A549 (cell line): ENCODE measurements at regions of chr2 and their contacts with region 1.

Region 1: DNA sequence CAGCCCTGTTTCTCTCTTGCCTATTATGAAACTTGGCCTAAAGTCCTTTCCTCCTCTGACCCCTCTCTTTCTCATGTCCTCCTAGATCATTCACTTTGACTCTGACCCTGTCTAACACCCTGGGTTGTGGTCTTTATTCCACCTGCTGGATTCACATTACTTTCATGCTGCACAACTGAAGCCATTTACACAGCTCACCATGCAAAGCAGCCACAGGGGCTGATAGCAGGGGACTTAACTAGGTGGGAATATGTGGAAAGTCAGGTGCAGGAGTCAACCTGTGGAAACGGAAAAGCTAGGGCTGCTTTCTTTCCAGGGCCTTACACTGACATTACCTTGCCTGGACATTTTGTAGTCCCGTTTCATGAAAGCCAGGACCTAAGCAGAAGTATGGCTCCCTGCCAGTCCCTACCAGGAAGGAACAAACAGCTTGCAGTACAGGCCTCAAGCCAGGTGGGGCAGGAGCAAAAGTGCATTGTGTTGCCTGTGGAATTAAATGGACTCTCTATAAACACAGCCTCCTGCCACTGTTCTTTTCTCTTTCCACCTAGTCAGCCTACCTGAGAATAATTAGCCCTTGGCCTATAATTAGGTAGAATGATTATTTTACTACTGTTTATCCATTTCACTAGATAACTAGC is 11.8 kb downstream of the MAPRE3 start:
- DNase-seq: peak; percentile 74 to 79
- ATAC-seq: peak; percentile 95 to 99
- H3K4me3 ChIP-seq: no peak overlapping the region
- H3K27ac ChIP-seq: no peak overlapping the region
- H3K4me1 ChIP-seq: peaks cover 10% of the 10 kb centered on the region; the same call in 2 of the 3 replicates
- CTCF ChIP-seq: no peak
- EP300 ChIP-seq: no peak
- POLR2A ChIP-seq: no peak
- RAD21 ChIP-seq: no peak

Region 2: DNA sequence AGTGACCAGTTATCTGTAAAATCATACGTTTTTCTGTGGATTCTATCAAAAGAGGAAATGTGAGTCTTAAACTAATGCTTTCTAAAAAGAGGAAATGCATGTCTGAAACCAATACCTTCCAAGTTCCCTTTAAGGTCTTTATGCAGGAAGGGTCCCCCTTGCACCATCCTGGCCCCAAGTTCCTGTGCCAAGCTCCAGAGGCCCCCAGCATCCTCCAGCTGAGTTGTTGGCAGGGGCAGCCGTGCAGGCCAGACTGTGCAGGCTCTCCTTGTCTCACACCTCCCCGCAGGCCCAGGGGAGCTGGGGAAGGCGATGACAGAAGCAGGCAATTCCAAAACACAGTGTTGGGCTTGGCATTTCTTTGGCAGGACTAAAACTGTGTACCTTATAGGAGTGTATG is 95.1 kb before region 1 on chr2:
- CTCF ChIA-PET with region 1: no interaction called
- POLR2A ChIA-PET with region 1: no interaction called
- DNase-seq: no peak
- ATAC-seq: no peak
- H3K4me3 ChIP-seq: no peak overlapping the region
- H3K27ac ChIP-seq: no peak overlapping the region
- H3K4me1 ChIP-seq: no peaks in the 10 kb centered on the region
- CTCF ChIP-seq: no peak
- EP300 ChIP-seq: no peak
- POLR2A ChIP-seq: no peak
- RAD21 ChIP-seq: no peak

Region 3: DNA sequence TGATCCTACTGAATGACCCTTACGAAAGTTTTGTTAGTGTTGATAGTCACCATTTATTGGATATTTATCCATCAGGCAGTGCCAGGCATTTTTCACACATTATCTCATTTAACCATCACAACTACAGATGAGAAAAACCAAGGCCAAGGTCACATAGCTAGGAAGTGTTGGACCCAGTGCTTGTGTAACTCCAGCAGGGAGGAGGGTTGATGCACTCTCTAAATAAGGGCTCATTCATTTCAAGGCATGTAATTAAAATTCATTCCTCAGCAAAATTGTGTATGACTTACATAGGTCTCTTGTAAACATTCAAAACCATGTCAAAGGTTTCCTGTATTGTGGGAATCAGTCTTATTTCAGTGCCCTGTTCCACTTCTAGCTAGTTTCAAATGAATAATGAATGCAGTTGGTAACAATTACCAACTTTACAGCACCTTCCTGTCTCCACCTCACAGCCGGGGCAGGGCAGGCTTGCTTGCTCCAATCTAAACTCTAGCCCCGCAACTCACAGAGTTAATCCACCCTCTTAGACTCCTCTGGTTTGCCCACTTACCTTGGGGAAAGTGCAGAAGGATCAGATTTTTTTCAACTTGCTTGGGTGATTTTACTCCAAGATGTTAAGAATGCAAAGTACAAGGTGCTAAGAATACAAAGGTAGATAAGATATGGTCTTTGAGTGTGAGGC is 17.6 kb before region 1 on chr2:
- CTCF ChIA-PET with region 1: interaction called, 53 read pairs
- POLR2A ChIA-PET with region 1: interaction called, 3 read pairs
- DNase-seq: no peak
- ATAC-seq: no peak
- H3K4me3 ChIP-seq: no peak overlapping the region
- H3K27ac ChIP-seq: no peak overlapping the region
- H3K4me1 ChIP-seq: peaks cover 12% of the 10 kb centered on the region; the same call in 2 of the 3 replicates
- CTCF ChIP-seq: no peak
- EP300 ChIP-seq: no peak
- POLR2A ChIP-seq: no peak
- RAD21 ChIP-seq: no peak

Region 4: DNA sequence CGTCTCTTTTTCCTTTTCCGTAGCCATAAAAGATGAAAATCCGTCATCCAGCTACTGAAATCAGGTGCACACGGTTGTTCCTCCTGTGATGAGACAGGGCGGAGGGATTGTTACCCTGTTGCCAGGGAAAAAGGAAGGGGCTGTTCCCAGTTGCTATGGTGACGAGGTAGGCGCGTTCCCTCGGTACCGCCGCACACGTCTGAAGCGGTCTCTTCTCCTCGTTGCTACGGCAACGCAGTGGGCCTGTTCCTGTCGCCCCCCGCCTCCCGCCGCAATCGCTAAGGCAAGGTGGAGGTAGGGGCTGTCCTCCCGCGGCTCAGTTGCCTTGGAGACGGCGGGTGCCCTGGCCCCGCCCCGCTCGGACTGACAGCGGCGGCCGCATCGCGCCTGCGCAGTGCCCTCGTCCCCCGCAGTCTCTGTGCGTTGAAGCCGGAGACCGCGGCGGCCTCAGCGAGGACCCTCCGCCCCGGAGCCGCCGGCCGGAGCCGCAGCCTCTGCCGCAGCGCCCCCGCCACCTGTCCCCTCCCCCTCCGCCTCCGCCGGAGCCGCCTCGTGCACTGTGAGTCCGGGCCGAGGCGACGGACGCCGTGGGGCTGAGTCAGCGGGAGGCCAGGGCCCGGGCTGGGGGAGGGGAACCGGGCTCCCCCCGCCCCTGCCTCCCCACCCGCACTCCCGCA is 11.8 kb before region 1 on chr2 and contains the start of gene MAPRE3:
- CTCF ChIA-PET with region 1: interaction called, 50 read pairs
- POLR2A ChIA-PET with region 1: interaction called, 3 read pairs
- DNase-seq: peak; percentile 83 to 95
- ATAC-seq: peak; percentile 89 to 95
- H3K4me3 ChIP-seq: peak within 1 kb of the TSS; percentile 93
- H3K27ac ChIP-seq: peak within 1 kb of the TSS; percentile 79 to 87
- H3K4me1 ChIP-seq: peaks cover 26% of the 10 kb centered on the region
- CTCF ChIP-seq: no peak
- EP300 ChIP-seq: no peak
- POLR2A ChIP-seq: no peak; the same call in 1 of the 2 replicates
- RAD21 ChIP-seq: no peak
- polyA plus RNA-seq, gene MAPRE3: 12.0 and 12.1 TPM in 2 replicates

Region 5: GRCh38 chr2:26993768-26994167 is 11.5 kb after region 1 on chr2:
- CTCF ChIA-PET with region 1: interaction called, 17 read pairs
- POLR2A ChIA-PET with region 1: no interaction called
- DNase-seq: no peak
- ATAC-seq: no peak
- H3K4me3 ChIP-seq: no peak overlapping the region
- H3K27ac ChIP-seq: no peak overlapping the region
- H3K4me1 ChIP-seq: peaks cover 3% of the 10 kb centered on the region; the same call in 1 of the 3 replicates
- CTCF ChIP-seq: no peak
- EP300 ChIP-seq: no peak
- POLR2A ChIP-seq: no peak
- RAD21 ChIP-seq: no peak